ENCODE measurements at regions of chr6 and their contacts with region 1.

Region 1: GRCh38 chr6:35583893-35584688 is 71.4 kb upstream of the TULP1 start:
- DNase-seq: peak in 4 of 5 donors; percentile 42 to 74 (median 62)
- ATAC-seq: peak; percentile 29 to 73 (median 65)
- H3K4me3 ChIP-seq: no peak overlapping the region
- H3K27ac ChIP-seq: peak overlapping the region in 4 of 12 donors; percentile 4 to 92 (median 59)
- H3K4me1 ChIP-seq: peaks cover 0 to 62% (median 15%) of the 10 kb centered on the region in 12 donors
- H3K27me3 ChIP-seq: no peaks in the 10 kb centered on the region
- CTCF ChIP-seq: peak; percentile 65 to 91 (median 87)
- POLR2A ChIP-seq: no peak

Region 2: GRCh38 chr6:35522660-35523658 is 61.1 kb before region 1 on chr6:
- intact Hi-C with region 1: loop called in 6 of 10 experiments (anchors 2 to 10 kb)
- DNase-seq: peak; percentile 54 to 84 (median 73)
- ATAC-seq: peak; percentile 73 to 95 (median 92)
- H3K4me3 ChIP-seq: peak overlapping the region in 9 of 12 donors; percentile 10 to 45 (median 28)
- H3K27ac ChIP-seq: no peak overlapping the region
- H3K4me1 ChIP-seq: peaks cover 0 to 12% (median 0%) of the 10 kb centered on the region in 12 donors
- H3K27me3 ChIP-seq: peaks cover 0 to 3% (median 0%) of the 10 kb centered on the region in 9 donors
- CTCF ChIP-seq: peak; percentile 92 to 100 (median 97)
- POLR2A ChIP-seq: no peak

Region 3: GRCh38 chr6:35624341-35625070 is 40.4 kb after region 1 on chr6:
- intact Hi-C with region 1: loop called in 2 of 10 experiments (anchors 5 kb)
- DNase-seq: no peak
- ATAC-seq: peak in 1 of 4 donors; percentile 39
- H3K4me3 ChIP-seq: no peak overlapping the region
- H3K27ac ChIP-seq: peak overlapping the region in 3 of 12 donors; percentile 13 to 46 (median 39)
- H3K4me1 ChIP-seq: peaks cover 0 to 66% (median 0%) of the 10 kb centered on the region in 12 donors
- H3K27me3 ChIP-seq: no peaks in the 10 kb centered on the region
- CTCF ChIP-seq: peak in 9 of 12 donors; percentile 14 to 41 (median 29)
- POLR2A ChIP-seq: no peak

Region 4: DNA sequence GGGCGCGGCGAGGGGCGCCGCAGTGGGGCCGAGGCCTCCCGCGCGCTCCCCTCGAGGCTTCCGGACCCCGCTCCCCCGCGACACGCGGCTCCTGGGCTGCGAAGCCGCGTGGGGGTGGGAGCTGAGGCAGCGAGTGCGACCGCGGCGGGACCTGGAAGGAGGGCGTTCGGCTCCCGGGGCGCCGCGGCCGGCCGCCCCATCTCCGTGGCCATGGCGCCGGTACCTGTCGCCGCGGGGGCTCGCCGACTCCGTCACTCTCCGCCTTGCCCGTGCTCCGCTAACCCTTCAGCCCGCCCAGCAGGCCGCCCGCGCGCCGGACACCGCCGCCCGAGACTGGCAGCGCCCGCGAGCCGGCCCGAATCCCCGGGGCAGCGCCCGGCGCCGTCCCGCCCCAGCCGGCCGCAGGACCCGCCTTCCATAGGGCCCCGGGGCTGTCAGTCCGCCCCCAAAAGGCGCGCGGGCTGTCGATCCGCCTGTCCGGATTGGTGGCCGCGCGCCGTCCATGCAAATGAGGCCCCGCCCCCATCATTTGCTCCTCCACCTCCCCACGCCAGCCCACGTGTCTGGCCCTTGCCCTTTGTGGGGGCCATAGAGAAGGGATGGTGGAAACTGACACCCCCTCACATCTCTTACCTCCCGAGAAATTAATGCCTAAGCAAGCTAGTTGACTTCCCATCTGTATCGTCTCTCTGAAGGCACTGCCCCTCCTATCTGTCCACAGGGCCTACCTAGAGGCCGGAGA is 104.7 kb after region 1 on chr6 and contains the start of gene FKBP5:
- intact Hi-C with region 1: loop called in 5 of 10 experiments (anchors 5 to 10 kb)
- DNase-seq: peak; percentile 97 to 98 (median 98)
- ATAC-seq: peak; percentile 85 to 96 (median 94)
- H3K4me3 ChIP-seq: peak within 1 kb of the TSS; percentile 83 to 100 (median 91)
- H3K27ac ChIP-seq: peak within 1 kb of the TSS; percentile 85 to 99 (median 94)
- H3K4me1 ChIP-seq: peaks cover 0 to 67% (median 22%) of the 10 kb centered on the region in 12 donors
- H3K27me3 ChIP-seq: no peaks in the 10 kb centered on the region
- CTCF ChIP-seq: no peak
- POLR2A ChIP-seq: peak; percentile 99
- total RNA-seq, gene FKBP5: 19.7 to 175 (median 104) TPM

Region 5: DNA sequence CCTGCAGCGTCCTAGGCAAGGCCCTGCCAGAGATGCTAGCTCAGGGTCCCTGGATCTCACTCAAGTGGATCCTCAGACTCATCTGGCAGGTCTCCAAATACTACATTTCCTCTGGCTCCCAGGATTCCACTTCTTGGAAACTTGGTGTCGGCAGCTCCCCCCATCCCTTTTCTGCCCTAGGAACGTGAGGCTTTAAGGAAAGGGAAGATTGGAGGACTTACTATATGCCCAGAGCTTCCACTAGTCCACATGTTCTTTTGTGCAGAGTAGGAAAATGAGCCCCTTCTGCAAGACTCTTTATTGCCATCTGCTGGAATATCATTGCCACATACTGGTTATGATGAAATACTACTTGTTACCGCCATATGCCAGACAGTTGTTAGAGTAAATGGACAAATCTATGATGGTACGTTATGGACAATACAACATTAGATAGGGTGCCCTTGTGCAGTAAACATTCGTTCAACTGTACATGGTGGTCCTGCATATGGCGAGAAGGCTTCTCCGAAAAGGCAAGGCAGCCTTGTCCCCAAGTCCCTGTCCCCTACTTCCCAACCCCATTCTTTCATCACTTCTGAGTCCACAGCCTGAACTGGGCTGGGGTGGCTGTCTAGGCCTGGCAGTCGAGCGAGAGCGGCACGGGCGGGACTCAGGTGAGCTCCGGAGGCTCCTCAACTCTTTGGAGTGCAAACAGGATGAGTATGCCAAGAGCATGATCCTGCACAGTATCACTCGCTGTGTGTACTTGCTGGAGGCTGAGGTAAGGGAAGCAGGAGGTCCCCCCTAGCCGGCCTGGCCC is 153.5 kb after region 1 on chr6:
- intact Hi-C with region 1: loop called (anchors 1 to 2 kb)
- DNase-seq: no peak
- ATAC-seq: peak; percentile 47 to 86 (median 78)
- H3K4me3 ChIP-seq: no peak overlapping the region
- H3K27ac ChIP-seq: peak overlapping the region in 1 of 12 donors; percentile 45
- H3K4me1 ChIP-seq: peaks cover 4 to 46% (median 13%) of the 10 kb centered on the region in 12 donors
- H3K27me3 ChIP-seq: no peaks in the 10 kb centered on the region
- CTCF ChIP-seq: peak; percentile 74 to 92 (median 87)
- POLR2A ChIP-seq: no peak

Measured in heart left ventricle (tissue), 16 donors.